ENCODE measurements at regions of chr9 and their contacts with region 1.

Region 1: DNA sequence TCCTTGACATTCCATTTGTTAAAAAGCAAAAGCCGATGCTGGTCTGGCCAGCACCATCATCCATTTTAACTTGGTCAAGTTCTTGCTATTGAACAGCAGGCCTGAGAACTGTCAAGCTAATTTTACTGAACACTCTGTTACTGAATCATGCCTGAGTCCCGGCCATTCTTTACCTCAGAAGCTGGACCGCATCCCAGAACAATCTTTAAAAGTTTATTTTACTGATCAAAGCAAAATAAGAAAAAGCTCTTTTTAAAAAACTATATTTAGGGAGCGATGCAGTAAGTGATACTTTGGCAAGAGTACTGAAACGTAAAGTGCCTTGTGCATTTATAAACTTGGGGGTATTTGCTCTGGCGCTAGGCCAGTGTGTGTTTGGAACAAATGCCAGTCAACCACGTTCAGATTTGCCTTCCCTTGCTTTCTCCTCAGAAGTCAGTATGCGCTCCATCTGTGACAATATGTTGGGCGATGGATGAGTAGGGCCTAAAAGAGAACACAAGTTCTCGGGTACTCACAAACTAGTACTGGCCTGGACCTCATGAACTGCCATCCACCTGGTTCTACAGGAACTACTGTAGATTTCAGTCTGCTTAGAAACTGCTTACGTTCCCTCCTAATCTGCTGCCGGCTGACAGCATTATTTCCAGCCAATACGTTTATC is 161.9 kb downstream of the MAPKAP1 start:
- DNase-seq: no peak
- CTCF ChIP-seq: no peak

Region 2: GRCh38 chr9:125663127-125663526 is 118.0 kb after region 1 on chr9:
- in situ Hi-C with region 1: no loop called
- DNase-seq: no peak
- CTCF ChIP-seq: no peak

Region 3: DNA sequence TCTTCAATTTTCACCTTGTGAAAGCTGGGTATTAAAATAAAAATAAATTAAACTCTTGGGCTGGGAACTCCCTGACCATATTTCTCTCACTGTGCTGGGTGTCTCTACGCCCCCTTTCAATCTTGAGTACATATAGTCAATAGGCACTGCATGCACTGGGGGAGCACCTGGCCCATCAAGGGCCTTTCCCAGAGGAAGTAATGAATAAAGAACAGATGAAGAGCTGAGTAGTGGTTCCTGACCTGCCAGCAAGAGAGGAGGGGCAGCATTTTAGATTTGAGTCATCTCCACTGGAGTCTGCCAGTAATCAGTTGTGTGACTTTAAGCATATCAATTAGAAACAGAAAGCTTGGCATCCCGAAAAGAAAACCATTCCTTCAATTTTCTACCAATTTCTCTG is 155.7 kb after region 1 on chr9:
- in situ Hi-C with region 1: no loop called
- DNase-seq: peak; percentile 71
- CTCF ChIP-seq: no peak

Region 4: GRCh38 chr9:126049896-126050604 is 504.9 kb after region 1 on chr9:
- in situ Hi-C with region 1: no loop called
- DNase-seq: no peak
- CTCF ChIP-seq: no peak

Region 5: DNA sequence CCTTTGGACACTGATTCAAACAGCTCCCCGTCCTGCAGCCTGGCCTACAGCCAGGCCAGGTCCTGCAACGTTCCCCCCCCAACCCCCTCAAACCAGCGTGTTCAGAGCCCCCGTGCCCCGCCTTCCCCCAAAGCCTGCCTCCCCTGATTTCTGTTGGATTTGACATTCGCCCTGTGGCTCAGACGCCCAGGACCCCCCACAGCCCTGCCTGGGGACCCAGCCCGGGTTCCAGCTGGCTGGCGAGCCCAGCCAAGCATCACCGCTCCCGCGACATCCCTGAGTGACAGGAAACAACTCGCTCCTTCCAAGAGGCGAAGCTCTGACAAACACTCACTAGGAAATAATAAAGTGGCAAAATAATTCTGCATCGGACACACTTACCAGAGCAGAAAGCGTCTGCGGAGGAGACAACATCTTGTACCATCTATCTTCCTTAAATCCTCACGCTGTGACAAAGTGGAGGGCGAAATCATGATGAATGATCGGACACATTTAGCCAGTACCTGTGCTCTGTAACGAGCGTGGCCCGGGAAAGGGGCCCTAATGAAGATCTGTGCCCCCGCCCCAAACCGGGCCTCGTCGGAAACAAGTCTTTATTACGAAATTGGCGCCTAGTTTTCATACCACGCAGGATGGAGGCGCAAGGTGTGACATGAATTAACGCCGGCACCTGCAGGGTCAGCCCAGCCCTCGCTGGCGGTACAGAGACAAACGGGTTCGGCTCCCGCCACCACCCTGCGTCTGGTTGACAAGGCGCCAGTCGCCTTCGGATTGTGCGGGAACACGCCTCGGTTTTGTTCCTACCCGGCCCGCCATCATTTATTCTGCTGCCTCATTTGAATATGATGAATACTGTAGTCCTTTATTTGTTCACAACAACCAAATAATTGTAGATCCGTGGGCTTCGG is 690.5 kb after region 1 on chr9:
- in situ Hi-C with region 1: loop called (anchors 10 kb)
- DNase-seq: peak; percentile 3
- CTCF ChIP-seq: no peak

Measured in GM13977 (cell line).